Mammary epithelial cell (primary cell): ENCODE measurements at regions of chr12 and their contacts with region 1.

Region 1: DNA sequence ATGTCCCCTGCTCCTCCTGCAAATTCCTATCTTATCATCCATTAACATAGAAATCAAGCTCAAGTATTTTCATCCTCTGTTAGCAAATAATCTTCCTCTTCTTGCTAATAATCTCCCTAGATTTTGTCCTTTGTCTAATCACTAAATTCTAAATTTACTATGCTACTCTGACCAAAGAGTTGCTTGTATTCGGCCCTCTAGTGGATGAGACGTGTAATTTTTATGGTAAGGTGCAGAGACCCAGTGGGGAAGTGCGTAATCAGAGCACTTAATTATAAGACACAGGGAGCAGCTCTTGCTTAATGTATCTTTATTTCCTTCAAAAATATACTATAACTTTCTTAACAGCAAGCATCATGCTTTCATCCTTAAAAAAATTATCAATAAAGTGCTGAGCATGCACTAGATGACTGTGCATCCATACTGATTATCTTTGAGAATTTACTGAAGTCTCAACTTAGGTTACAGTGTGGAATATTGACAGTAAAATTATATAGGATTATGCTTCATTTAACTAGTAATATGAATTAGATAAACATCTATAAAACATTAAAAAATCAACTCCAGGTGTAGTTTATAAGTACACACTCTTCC is 212.6 kb downstream of the SLC16A7 start:
- DNase-seq: peak; percentile 22
- H3K4me3 ChIP-seq: no peak overlapping the region
- H3K27ac ChIP-seq: no peak overlapping the region
- H3K4me1 ChIP-seq: peaks cover 5% of the 10 kb centered on the region
- H3K27me3 ChIP-seq: no peaks in the 10 kb centered on the region
- CTCF ChIP-seq: peak; percentile 76 to 80

Region 2: DNA sequence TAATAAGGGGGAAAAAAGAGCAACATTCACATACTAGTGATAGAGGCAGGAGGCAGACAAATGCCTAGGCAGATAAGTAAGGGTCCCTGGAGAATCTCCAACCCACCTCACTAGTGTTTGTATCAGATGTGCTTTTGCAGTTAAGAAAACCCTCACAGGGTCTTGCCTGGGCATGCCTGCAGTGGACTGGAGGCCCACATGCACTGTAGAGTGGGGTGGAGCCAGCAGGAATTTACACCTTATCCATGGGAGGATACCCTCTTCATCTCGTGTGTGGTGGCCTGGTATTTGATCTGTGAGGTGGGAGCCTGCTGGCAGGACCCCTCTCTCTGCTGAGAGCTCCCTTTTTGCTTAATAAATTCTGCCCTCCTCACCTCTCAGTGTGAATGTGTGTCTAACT is 450.6 kb before region 1 on chr12:
- CTCF ChIA-PET with region 1: no interaction called
- dilution Hi-C with region 1: no loop called
- in situ Hi-C with region 1: no loop called
- intact Hi-C with region 1: no loop called
- DNase-seq: peak; percentile 41
- H3K4me3 ChIP-seq: no peak overlapping the region
- H3K27ac ChIP-seq: peak overlapping the region; percentile 84
- H3K4me1 ChIP-seq: peaks cover 5% of the 10 kb centered on the region
- H3K27me3 ChIP-seq: no peaks in the 10 kb centered on the region
- CTCF ChIP-seq: no peak

Region 3: DNA sequence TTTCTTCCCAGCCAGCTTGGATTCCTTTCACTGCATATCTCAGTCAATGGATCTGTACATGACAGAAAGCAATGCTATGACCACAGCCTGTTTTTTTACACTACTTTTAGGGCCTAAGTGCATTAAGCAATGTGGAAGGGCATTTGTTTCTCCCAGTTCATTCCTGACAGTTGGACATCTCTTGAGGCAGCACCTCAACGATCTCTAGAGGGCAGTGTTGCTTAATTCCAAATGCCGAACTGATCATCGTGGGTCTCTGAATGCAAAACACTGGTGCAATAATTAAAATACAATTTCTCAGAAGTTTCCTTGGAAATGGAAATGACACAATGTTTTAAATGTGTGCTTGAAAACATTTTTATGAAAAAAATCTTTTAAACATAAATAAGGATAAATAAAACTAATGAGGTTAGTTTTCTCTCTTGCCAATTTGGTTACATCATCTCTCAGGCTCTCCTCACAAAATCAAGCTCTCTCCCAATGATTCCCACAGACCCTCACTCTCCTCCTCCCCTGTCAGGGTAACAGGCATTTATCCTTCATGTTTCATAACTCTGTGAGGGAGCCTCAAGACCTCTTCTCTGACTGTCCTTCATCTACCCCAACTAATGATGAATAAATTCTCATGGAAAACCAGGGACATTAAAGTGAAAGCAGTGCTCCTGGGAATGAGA is 405.0 kb before region 1 on chr12:
- CTCF ChIA-PET with region 1: no interaction called
- dilution Hi-C with region 1: no loop called
- in situ Hi-C with region 1: loop called in 1 of 2 experiments (anchors 25 kb)
- intact Hi-C with region 1: loop called (anchors 2 kb)
- DNase-seq: peak; percentile 42
- H3K4me3 ChIP-seq: peak overlapping the region in 1 of 3 experiments; percentile 29
- H3K27ac ChIP-seq: no peak overlapping the region
- H3K4me1 ChIP-seq: peaks cover 4% of the 10 kb centered on the region
- H3K27me3 ChIP-seq: no peaks in the 10 kb centered on the region
- CTCF ChIP-seq: peak; percentile 85 to 90

Region 4: DNA sequence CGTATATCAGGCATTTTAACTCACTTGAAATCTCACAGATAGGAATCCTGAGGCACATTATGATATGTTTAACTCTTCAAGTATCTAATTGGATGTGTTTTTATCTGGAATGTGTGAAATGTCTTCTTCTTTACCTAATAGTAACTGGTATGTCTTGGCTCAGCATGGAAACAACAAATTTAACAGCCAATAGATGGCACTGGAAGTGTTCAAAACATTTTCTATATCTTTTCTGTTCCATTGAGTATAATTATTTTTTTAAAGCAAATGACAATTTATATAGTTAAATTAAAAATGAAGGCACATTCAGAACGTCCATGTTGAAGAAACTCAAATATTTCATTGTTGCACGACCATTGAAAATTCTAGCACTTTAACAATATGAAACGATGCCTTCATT is 377.1 kb before region 1 on chr12:
- CTCF ChIA-PET with region 1: no interaction called
- dilution Hi-C with region 1: no loop called
- in situ Hi-C with region 1: no loop called
- intact Hi-C with region 1: loop called (anchors 2 kb)
- DNase-seq: no peak
- H3K4me3 ChIP-seq: no peak overlapping the region
- H3K27ac ChIP-seq: no peak overlapping the region
- H3K4me1 ChIP-seq: no peaks in the 10 kb centered on the region
- H3K27me3 ChIP-seq: no peaks in the 10 kb centered on the region
- CTCF ChIP-seq: peak in 1 of 2 donors; percentile 35